ENCODE measurements at regions of chr3 and their contacts with region 1.

Region 1: DNA sequence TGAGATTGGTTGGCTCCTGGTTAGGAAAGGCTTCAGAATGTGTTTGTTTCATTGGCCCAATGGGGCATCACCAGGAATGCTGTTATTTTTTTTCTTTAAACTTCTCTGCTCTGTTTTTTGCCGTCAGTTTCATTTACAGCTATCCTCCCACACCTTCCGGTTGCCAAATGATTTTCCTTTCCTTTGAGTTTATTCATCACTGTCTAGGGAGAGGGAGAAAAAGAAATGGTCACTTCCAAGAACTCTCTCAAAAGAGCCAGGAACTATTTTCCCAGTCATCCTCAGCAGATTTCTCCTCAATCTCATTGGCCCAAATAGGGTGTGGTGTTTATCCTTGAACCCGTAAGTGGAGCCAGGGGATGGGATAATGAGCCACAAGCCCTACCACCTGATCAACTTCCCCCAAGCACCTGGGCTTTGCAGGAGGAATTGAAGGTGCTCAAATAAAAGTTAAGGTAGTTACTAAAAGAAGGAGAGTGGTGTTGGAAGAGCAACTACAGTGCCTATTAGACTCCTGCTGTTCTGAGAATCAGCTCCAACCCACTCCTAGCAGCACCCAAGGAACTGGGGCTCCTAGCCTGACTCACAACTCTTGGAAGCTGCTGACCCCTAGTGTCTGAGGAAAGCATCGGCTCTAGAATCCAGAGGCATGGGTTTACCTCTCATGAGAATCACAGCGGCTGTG is 183.8 kb upstream of the IL12A start:
- DNase-seq: peak; percentile 90
- H3K4me3 ChIP-seq: no peak overlapping the region
- H3K27ac ChIP-seq: no peak overlapping the region
- H3K4me1 ChIP-seq: no peaks in the 10 kb centered on the region
- H3K27me3 ChIP-seq: no peaks in the 10 kb centered on the region
- CTCF ChIP-seq: peak; percentile 93

Region 2: DNA sequence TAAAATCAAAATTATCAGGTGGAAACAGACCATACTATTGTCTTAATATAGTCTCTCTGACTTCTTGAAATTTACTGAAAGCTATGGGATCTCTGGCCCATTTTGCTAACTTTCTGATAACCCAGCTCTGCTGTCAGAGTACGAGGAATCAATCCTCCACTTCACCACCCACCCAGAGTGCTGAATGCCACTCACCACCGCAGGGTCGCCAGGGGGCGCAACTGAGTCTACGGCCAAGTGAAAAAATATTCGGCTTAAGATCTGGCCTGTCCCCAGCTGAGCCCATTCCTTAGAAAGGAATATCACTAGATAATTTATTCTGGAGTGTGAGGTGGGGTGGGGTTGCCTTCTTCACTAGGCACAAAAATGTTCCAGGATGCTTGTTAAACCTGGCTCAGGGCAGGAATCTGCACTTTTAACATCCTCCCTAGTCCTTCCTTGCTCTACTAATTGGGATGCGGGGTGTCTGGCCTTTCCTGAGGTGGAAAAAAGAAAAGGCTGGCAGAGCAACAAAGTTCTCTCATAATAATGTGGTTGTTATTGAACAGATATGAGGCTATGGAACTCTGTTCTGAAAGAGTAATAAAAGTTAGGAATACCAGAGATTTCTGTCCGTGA is 482.4 kb before region 1 on chr3:
- CTCF ChIA-PET with region 1: interaction called, 5 read pairs
- POLR2A ChIA-PET with region 1: no interaction called
- intact Hi-C with region 1: loop called (anchors 1 kb)
- DNase-seq: peak; percentile 54
- H3K4me3 ChIP-seq: no peak overlapping the region
- H3K27ac ChIP-seq: no peak overlapping the region
- H3K4me1 ChIP-seq: no peaks in the 10 kb centered on the region
- H3K27me3 ChIP-seq: no peaks in the 10 kb centered on the region
- CTCF ChIP-seq: peak; percentile 96

Region 3: GRCh38 chr3:159616212-159616825 is 188.5 kb before region 1 on chr3:
- CTCF ChIA-PET with region 1: no interaction called
- POLR2A ChIA-PET with region 1: no interaction called
- intact Hi-C with region 1: loop called (anchors 1 kb)
- DNase-seq: peak; percentile 37
- H3K4me3 ChIP-seq: no peak overlapping the region
- H3K27ac ChIP-seq: no peak overlapping the region
- H3K4me1 ChIP-seq: no peaks in the 10 kb centered on the region
- H3K27me3 ChIP-seq: peaks cover 4% of the 10 kb centered on the region
- CTCF ChIP-seq: peak; percentile 51